ENCODE measurements at regions of chr1 and their contacts with region 1.

Region 1: DNA sequence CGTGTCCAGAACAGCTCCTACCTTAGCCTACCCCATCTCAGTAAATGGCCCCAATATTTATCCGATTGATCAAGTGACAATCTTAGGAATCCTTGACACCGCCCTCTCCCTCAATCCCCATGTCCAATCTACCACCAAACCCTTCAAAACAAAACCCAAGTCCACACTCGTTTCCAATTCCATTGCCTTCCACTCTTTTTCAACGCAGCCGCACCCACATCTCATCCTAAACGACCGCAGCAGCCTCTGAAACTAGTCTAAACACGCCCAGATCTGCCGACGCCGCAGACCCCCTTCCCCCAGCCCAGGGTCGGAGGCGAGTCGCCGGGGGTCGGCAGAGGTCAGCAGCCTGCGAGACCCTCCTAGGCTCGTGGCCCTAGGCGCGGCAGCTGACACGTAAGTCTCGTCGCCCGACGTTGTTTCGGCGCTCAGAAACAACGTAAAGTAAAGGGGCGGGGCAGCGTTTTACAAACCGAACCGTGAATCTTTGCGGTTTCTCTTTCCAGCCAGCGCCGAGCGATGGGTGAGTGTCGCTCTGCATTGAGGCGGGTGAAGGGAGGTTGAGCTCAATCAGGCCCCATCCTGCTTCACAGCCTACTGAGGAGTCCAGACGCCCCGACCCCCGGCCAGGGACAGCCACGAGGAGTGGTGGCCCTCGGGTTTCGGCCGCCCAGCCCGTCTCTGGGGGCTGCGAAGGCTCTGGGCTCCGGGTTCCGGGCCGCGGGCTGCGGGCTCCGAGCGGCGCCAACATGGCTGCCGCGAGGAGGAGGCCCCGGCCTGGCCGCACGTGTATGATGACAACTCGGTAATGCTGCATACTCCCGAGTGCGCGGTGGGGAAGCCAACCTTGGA is at the start of gene RPS8:
- DNase-seq: peak; percentile 84
- ATAC-seq: peak; percentile 82
- H3K4me3 Mint-ChIP-seq: peak within 1 kb of the TSS; percentile 98
- H3K27ac Mint-ChIP-seq: peak within 1 kb of the TSS; percentile 99
- H3K4me1 Mint-ChIP-seq: peaks cover 40% of the 10 kb centered on the region
- H3K27me3 Mint-ChIP-seq: no peaks in the 10 kb centered on the region
- CTCF ChIP-seq: no peak
- total RNA-seq, gene RPS8: 3,767 and 4,240 TPM in 2 replicates

Region 2: DNA sequence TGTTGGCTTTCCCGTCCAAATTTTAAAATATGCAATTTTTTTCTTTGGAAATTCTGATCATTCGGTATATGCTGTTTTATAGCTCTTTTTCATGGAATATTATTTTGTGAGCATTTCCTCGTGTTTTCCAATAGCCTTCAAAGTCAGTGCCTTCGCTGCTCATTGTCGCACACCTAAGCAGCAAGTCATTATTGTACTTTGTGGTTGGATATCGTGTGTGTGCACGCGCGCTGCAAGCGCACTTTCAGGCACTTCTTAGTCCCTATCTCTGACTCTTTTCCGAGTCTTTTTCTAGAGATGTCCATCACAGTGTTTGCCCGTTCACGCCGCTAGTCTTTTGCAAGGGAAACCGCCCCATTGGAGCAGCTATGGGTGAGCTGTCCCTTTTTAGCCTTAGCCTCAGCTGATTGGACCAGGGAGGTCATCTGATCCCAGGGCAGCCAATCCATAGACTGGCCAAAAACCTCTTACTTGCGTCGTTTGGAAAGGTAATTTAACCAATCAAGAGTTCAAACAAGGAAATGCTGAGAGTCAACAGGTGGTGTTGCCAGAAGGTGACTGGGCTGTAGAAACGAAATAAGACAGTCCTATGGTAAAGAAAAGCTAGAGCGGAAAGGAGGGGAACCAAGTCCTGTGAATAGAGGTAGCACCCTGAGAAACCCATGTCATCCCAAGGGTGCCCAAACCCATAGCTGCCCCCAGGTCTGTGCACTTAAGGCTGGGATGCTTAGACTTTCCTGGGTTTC is 1320.9 kb before region 1 on chr1:
- CTCF ChIA-PET with region 1: no interaction called
- POLR2A ChIA-PET with region 1: no interaction called
- intact Hi-C with region 1: no loop called
- DNase-seq: no peak
- ATAC-seq: peak; percentile 80
- H3K4me3 Mint-ChIP-seq: peak overlapping the region; percentile 89
- H3K27ac Mint-ChIP-seq: peak overlapping the region; percentile 76
- H3K4me1 Mint-ChIP-seq: peaks cover 17% of the 10 kb centered on the region
- H3K27me3 Mint-ChIP-seq: peaks cover 20% of the 10 kb centered on the region
- CTCF ChIP-seq: no peak

Region 3: GRCh38 chr1:44714944-44715571 is 60.2 kb before region 1 on chr1:
- CTCF ChIA-PET with region 1: interaction called, 3 read pairs
- POLR2A ChIA-PET with region 1: interaction called, 114 read pairs
- intact Hi-C with region 1: no loop called
- DNase-seq: no peak
- ATAC-seq: peak; percentile 78
- H3K4me3 Mint-ChIP-seq: peak overlapping the region; percentile 58
- H3K27ac Mint-ChIP-seq: peak overlapping the region; percentile 89
- H3K4me1 Mint-ChIP-seq: peaks cover 75% of the 10 kb centered on the region
- H3K27me3 Mint-ChIP-seq: no peaks in the 10 kb centered on the region
- CTCF ChIP-seq: peak; percentile 72

Region 4: GRCh38 chr1:44747878-44748277 is 27.4 kb before region 1 on chr1:
- CTCF ChIA-PET with region 1: no interaction called
- POLR2A ChIA-PET with region 1: interaction called, 11 read pairs
- intact Hi-C with region 1: no loop called
- DNase-seq: no peak
- ATAC-seq: no peak
- H3K4me3 Mint-ChIP-seq: no peak overlapping the region
- H3K27ac Mint-ChIP-seq: no peak overlapping the region
- H3K4me1 Mint-ChIP-seq: peaks cover 6% of the 10 kb centered on the region
- H3K27me3 Mint-ChIP-seq: no peaks in the 10 kb centered on the region
- CTCF ChIP-seq: no peak

Region 5: GRCh38 chr1:44792783-44793714 is 17.7 kb after region 1 on chr1:
- CTCF ChIA-PET with region 1: no interaction called
- POLR2A ChIA-PET with region 1: interaction called, 103 read pairs
- intact Hi-C with region 1: no loop called
- DNase-seq: no peak
- ATAC-seq: no peak
- H3K4me3 Mint-ChIP-seq: no peak overlapping the region
- H3K27ac Mint-ChIP-seq: no peak overlapping the region
- H3K4me1 Mint-ChIP-seq: no peaks in the 10 kb centered on the region
- H3K27me3 Mint-ChIP-seq: no peaks in the 10 kb centered on the region
- CTCF ChIP-seq: no peak

Region 6: GRCh38 chr1:44812822-44813543 is 37.7 kb after region 1 on chr1:
- CTCF ChIA-PET with region 1: no interaction called
- POLR2A ChIA-PET with region 1: interaction called, 73 read pairs
- intact Hi-C with region 1: no loop called
- DNase-seq: no peak
- ATAC-seq: no peak
- H3K4me3 Mint-ChIP-seq: peak overlapping the region; percentile 11
- H3K27ac Mint-ChIP-seq: peak overlapping the region; percentile 50
- H3K4me1 Mint-ChIP-seq: peaks cover 63% of the 10 kb centered on the region
- H3K27me3 Mint-ChIP-seq: no peaks in the 10 kb centered on the region
- CTCF ChIP-seq: no peak

Region 7: GRCh38 chr1:44867801-44868200 is 92.5 kb after region 1 on chr1:
- CTCF ChIA-PET with region 1: no interaction called
- POLR2A ChIA-PET with region 1: no interaction called
- intact Hi-C with region 1: no loop called
- DNase-seq: no peak
- ATAC-seq: no peak
- H3K4me3 Mint-ChIP-seq: no peak overlapping the region
- H3K27ac Mint-ChIP-seq: no peak overlapping the region
- H3K4me1 Mint-ChIP-seq: no peaks in the 10 kb centered on the region
- H3K27me3 Mint-ChIP-seq: no peaks in the 10 kb centered on the region
- CTCF ChIP-seq: no peak

Region 8: GRCh38 chr1:45339789-45340570 is 564.7 kb after region 1 on chr1 and contains the starts of genes MUTYH and TOE1:
- CTCF ChIA-PET with region 1: no interaction called
- POLR2A ChIA-PET with region 1: interaction called, 16 read pairs
- intact Hi-C with region 1: no loop called
- DNase-seq: peak; percentile 85
- ATAC-seq: peak; percentile 86
- H3K4me3 Mint-ChIP-seq: peak within 1 kb of the TSS; percentile 100
- H3K27ac Mint-ChIP-seq: peak within 1 kb of the TSS; percentile 99
- H3K4me1 Mint-ChIP-seq: peaks cover 39% of the 10 kb centered on the region
- H3K27me3 Mint-ChIP-seq: no peaks in the 10 kb centered on the region
- CTCF ChIP-seq: no peak
- total RNA-seq, gene MUTYH: 61.0 and 63.0 TPM in 2 replicates
- total RNA-seq, gene TOE1: 24.6 and 25.3 TPM in 2 replicates

Measured in activated B cell treated with CpG ODN at 0.5 μM for 24 hours (primary cell).